ENCODE measurements at regions of chr1 and their contacts with region 1.

Region 1: GRCh38 chr1:168342572-168343280 is 62.0 kb downstream of the TBX19 start:
- DNase-seq: peak; percentile 86
- H3K4me3 Mint-ChIP-seq: peak overlapping the region; percentile 37
- H3K27ac Mint-ChIP-seq: no peak overlapping the region
- H3K4me1 Mint-ChIP-seq: peaks cover 18% of the 10 kb centered on the region
- H3K27me3 Mint-ChIP-seq: no peaks in the 10 kb centered on the region
- CTCF ChIP-seq: peak; percentile 88

Region 2: GRCh38 chr1:168365719-168366479 is 23.2 kb after region 1 on chr1:
- CTCF ChIA-PET with region 1: interaction called, 51 read pairs
- POLR2A ChIA-PET with region 1: interaction called, 4 read pairs
- intact Hi-C with region 1: no loop called
- DNase-seq: no peak
- H3K4me3 Mint-ChIP-seq: no peak overlapping the region
- H3K27ac Mint-ChIP-seq: no peak overlapping the region
- H3K4me1 Mint-ChIP-seq: no peaks in the 10 kb centered on the region
- H3K27me3 Mint-ChIP-seq: peaks cover 32% of the 10 kb centered on the region
- CTCF ChIP-seq: peak; percentile 10

Region 3: DNA sequence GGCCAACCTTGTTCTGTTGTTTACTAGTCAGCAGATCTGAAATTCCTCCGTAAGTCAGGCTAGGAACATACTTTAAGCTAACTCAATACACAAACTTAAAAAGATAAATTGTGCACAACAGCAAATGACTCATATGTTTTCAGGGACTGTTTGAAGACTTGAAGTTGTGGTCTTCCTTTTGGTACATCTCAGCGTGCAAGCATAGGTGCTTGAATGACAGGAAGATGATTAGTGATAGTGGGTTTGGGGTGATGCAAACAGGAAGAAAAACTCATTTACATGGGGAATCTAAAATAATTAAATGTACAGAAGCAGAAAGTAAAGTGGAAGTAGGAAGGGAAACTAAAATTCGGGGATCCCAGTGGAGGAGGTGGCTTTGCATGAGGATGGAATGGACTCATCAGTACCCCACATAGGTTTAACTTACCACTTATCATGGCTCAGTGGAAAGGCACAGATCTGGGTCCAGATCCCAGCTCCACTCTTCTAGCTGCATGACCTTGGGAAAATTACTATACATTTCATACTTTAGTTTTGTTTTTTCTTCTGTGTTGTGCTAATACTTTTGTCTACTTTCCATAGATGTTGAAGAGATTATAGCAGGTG is 78.8 kb after region 1 on chr1:
- CTCF ChIA-PET with region 1: interaction called, 16 read pairs
- POLR2A ChIA-PET with region 1: interaction called, 3 read pairs
- intact Hi-C with region 1: no loop called
- DNase-seq: no peak
- H3K4me3 Mint-ChIP-seq: no peak overlapping the region
- H3K27ac Mint-ChIP-seq: no peak overlapping the region
- H3K4me1 Mint-ChIP-seq: no peaks in the 10 kb centered on the region
- H3K27me3 Mint-ChIP-seq: peaks cover 9% of the 10 kb centered on the region
- CTCF ChIP-seq: no peak

Region 4: GRCh38 chr1:168498159-168498631 is 155.5 kb after region 1 on chr1:
- CTCF ChIA-PET with region 1: interaction called, 12 read pairs
- POLR2A ChIA-PET with region 1: no interaction called
- intact Hi-C with region 1: no loop called
- DNase-seq: no peak
- H3K4me3 Mint-ChIP-seq: no peak overlapping the region
- H3K27ac Mint-ChIP-seq: no peak overlapping the region
- H3K4me1 Mint-ChIP-seq: peaks cover 13% of the 10 kb centered on the region
- H3K27me3 Mint-ChIP-seq: no peaks in the 10 kb centered on the region
- CTCF ChIP-seq: no peak

Region 5: GRCh38 chr1:168585191-168585590 is 242.5 kb after region 1 on chr1:
- CTCF ChIA-PET with region 1: interaction called, 99 read pairs
- POLR2A ChIA-PET with region 1: interaction called, 4 read pairs
- intact Hi-C with region 1: no loop called
- DNase-seq: peak; percentile 49
- H3K4me3 Mint-ChIP-seq: no peak overlapping the region
- H3K27ac Mint-ChIP-seq: no peak overlapping the region
- H3K4me1 Mint-ChIP-seq: peaks cover 12% of the 10 kb centered on the region
- H3K27me3 Mint-ChIP-seq: no peaks in the 10 kb centered on the region
- CTCF ChIP-seq: no peak

Region 6: DNA sequence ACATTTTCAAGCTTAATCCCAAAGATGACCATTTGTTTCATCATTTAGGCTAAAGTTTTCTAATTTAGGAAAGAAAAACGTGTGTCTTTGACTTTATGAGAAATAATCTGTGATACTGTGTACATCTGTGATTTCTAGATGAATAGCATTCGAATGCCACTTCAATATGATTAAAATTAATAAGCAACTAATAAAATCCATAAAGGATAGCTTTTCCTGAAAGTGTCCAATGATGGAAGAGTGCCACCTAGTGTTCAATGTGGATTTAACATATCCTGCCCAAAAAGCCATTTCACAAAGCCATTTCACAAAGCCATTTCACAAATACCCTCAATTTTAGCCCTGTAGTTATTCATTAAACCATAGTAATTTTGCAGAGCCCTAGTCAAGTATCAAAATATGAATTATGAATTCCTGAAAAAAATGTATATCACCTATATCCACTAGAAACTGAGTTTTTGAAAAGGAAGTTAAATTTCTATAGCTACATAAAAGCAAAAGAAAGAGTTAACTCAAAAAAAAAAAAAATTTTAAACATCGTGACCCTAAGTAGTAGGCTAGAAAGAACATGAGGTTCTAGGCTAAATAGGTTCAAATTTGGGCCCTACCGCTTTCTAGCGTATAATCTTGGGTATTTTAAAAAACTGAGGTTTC is 1005.8 kb after region 1 on chr1:
- CTCF ChIA-PET with region 1: interaction called, 65 read pairs
- POLR2A ChIA-PET with region 1: interaction called, 5 read pairs
- intact Hi-C with region 1: loop called (anchors 1 kb)
- DNase-seq: peak; percentile 77
- H3K4me3 Mint-ChIP-seq: no peak overlapping the region
- H3K27ac Mint-ChIP-seq: no peak overlapping the region
- H3K4me1 Mint-ChIP-seq: no peaks in the 10 kb centered on the region
- H3K27me3 Mint-ChIP-seq: no peaks in the 10 kb centered on the region
- CTCF ChIP-seq: peak; percentile 84

Measured in MCF 10A (cell line).